Prostate gland (tissue), 2 donors: ENCODE measurements at regions of chr1 and their contacts with region 1.

Region 1: DNA sequence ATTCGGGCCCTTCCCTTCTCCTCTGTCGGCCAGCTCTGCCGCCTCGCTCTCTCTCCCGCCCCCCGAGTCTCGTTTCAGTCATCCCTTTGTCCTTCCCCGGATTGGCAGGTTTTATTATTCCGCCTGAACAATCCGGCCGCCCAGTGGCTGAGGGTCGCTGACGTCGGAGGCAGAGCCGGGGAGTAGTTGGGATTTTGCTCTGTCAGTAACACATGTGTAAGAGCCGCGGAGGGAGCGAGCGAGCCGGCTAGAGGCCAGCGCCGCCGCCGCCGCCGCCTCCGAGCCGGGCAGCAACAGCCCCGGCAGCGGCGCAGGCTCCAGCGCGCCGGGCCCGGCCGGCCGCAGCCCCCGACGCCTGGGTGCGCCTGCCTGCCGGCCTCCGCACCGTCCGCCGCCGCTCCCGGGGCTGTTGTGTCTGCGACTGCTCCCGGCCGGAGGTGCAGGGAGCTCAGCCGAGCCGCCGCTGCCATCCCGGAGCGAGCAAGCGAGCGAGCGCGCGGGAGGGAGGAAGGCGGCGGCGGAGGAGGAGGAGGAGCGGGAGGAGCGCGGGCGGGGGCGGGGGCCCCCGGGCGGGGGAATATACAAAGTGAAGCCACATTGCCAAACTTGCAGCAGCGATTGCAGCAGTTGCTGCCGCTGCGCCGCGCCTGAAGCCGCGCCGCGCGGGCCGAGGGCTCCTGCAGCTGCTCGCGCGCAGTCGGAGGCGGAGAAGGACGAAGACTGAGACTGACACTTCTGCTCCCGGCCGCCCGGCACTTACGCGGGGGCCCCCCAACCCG is at the start of gene LMO4:
- DNase-seq: peak; percentile 97
- H3K4me3 ChIP-seq: peak within 1 kb of the TSS; percentile 63 to 70
- H3K27ac ChIP-seq: peak within 1 kb of the TSS; percentile 95
- H3K4me1 ChIP-seq: no peaks in the 10 kb centered on the region
- H3K27me3 ChIP-seq: no peaks in the 10 kb centered on the region
- CTCF ChIP-seq: peak in 2 of 4 experiments; percentile 43 to 44
- POLR2A ChIP-seq: peak; percentile 93
- total RNA-seq, gene LMO4: 41.9 to 78.0 TPM

Region 2: DNA sequence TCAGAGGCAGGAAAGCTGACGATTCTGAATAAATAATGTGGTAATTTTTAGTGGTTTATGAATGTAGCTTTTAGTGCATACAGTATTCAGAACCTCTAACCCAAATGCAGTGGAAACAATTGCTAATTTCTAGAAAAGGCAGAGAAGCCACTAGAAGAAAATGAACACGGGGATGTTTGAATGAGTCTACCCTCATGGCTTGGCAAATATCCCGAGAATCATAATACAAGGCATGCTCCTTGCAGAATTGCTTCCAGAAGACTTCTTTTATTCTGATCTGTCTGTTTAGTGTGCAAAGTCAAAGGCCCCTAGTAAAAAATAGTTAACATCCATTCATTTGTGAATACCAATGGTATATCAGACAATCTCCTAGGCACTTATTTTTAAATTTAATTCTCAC is 247.1 kb after region 1 on chr1:
- intact Hi-C with region 1: loop called (anchors 5 kb)
- DNase-seq: no peak
- H3K4me3 ChIP-seq: no peak overlapping the region
- H3K27ac ChIP-seq: no peak overlapping the region
- H3K4me1 ChIP-seq: no peaks in the 10 kb centered on the region
- H3K27me3 ChIP-seq: no peaks in the 10 kb centered on the region
- CTCF ChIP-seq: no peak
- POLR2A ChIP-seq: no peak

Region 3: DNA sequence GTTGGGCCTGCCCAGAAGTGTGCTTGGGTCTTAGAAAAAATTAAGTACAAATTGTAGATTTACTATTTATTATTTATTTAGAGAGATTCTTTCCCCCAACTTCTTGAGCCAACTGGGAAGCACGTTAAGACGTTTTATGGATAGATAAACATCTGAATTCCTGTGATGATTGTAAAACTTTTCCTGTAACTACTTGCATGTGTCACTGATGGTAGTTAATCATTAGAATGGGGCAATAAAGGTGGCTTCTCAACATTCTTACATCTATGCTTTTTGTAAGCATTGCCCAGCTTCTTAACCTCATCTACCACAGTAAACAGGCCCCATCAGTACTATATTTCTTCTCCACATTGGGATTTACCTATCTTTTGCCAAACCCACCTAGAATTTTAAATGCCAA is 560.0 kb after region 1 on chr1:
- intact Hi-C with region 1: loop called (anchors 5 kb)
- DNase-seq: peak; percentile 8
- H3K4me3 ChIP-seq: no peak overlapping the region
- H3K27ac ChIP-seq: peak overlapping the region in 1 of 2 donors; percentile 28
- H3K4me1 ChIP-seq: no peaks in the 10 kb centered on the region
- H3K27me3 ChIP-seq: no peaks in the 10 kb centered on the region
- CTCF ChIP-seq: no peak
- POLR2A ChIP-seq: no peak

Region 4: DNA sequence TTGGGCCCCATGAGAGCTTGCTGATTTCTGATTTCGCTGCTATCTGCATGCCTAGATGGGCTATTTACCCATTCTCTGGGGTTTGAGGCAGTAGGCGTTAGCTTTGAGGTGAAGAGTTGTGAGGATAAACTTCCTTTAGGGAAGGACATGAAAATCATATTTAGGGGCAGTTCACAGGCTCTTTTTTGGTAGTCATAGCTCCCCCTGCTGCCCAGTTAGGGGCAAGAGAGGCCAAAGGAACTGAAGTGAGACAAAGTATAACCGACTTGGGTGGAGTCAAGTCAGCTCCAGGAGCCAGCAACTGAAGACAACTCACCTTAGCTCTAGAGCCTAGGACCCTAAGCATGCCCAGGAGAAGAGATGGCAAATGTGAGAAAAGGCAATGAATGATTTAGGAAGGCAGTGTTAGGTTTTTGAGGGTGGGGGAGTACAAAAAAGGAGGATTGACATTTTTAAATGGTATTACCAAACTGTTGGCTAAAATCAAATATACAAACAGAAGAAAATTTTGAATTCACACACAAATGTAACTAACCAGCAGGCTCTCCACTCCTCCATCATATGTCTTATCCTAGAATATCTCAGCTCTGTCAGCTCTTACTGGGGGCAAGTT is 625.4 kb after region 1 on chr1:
- intact Hi-C with region 1: loop called (anchors 5 kb)
- DNase-seq: peak; percentile 57
- H3K4me3 ChIP-seq: no peak overlapping the region
- H3K27ac ChIP-seq: no peak overlapping the region
- H3K4me1 ChIP-seq: no peaks in the 10 kb centered on the region
- H3K27me3 ChIP-seq: no peaks in the 10 kb centered on the region
- CTCF ChIP-seq: peak; percentile 63 to 74 (median 69)
- POLR2A ChIP-seq: no peak

Region 5: GRCh38 chr1:87968197-87968955 is 639.9 kb after region 1 on chr1:
- intact Hi-C with region 1: loop called (anchors 5 kb)
- DNase-seq: no peak
- H3K4me3 ChIP-seq: no peak overlapping the region
- H3K27ac ChIP-seq: no peak overlapping the region
- H3K4me1 ChIP-seq: no peaks in the 10 kb centered on the region
- H3K27me3 ChIP-seq: no peaks in the 10 kb centered on the region
- CTCF ChIP-seq: no peak
- POLR2A ChIP-seq: no peak